ENCODE measurements at regions of chr6 and their contacts with region 1.

Region 1: DNA sequence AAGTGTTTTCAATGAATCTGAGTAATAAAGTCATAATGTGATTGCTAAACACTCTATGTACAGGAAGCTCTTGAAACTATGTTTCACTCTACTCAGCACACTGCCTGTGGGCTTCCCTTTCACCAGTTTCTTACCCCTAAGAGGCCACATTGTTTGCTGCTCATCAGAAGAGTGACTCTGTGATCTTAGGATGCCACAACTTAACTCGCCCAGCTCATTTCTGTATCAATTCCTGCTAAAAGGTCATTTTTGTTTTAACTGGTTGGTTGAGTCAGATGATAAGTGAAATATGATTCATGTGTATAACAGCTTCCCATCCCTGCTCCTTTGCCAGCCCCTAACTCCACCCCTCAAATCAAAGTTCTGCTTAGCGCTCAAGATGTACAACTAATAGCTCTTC is 9.8 kb upstream of the NDUFAF4 start:
- DNase-seq: no peak
- ATAC-seq: peak in 3 of 4 donors; percentile 40 to 47 (median 41)
- H3K4me3 ChIP-seq: no peak overlapping the region
- H3K27ac ChIP-seq: no peak overlapping the region
- H3K4me1 ChIP-seq: no peaks in the 10 kb centered on the region
- H3K27me3 ChIP-seq: no peaks in the 10 kb centered on the region
- CTCF ChIP-seq: no peak
- POLR2A ChIP-seq: no peak

Region 2: DNA sequence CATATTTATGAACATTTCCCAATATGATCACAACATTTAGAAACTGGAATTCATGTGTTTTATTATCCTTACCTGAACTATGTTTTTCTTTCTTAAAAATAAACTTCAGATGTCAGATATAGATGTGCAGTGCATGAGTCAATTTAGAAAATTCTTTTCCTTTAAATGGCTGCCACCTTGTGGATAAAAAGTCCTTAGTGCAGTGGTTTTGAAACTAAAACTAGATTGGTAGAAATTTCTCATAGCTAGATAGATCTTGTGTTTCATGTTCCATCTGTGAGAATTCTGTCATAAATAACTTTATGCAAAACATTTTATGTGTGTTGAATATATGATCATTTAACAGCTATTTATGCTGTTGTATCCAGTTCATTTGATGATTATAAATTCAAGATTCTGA is 152.0 kb after region 1 on chr6:
- intact Hi-C with region 1: loop called (anchors 5 to 10 kb)
- DNase-seq: no peak
- ATAC-seq: peak; percentile 41 to 76 (median 64)
- H3K4me3 ChIP-seq: no peak overlapping the region
- H3K27ac ChIP-seq: no peak overlapping the region
- H3K4me1 ChIP-seq: peaks cover 0 to 3% (median 0%) of the 10 kb centered on the region in 4 donors
- H3K27me3 ChIP-seq: no peaks in the 10 kb centered on the region
- CTCF ChIP-seq: peak; percentile 62 to 64 (median 62)
- POLR2A ChIP-seq: no peak

Region 3: DNA sequence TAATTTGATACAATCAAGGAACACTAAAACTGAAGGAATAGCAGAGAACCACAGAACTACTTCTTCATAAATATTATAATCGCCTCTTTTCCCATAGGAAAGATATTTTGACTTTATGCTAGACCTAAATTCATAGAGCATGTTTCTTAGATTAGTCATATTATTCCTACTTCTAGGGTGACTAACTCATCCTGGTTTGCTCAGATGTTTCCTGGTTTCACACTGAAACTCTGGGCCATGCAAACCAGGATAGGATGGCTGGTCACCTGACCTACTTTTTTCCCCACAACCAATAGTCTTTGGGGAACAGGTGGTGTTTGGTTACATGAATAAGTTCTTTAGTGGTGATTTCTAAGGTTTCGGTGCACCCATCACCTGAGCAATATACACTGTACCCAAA is 332.7 kb after region 1 on chr6:
- intact Hi-C with region 1: no loop called
- DNase-seq: no peak
- ATAC-seq: no peak
- H3K4me3 ChIP-seq: no peak overlapping the region
- H3K27ac ChIP-seq: no peak overlapping the region
- H3K4me1 ChIP-seq: no peaks in the 10 kb centered on the region
- H3K27me3 ChIP-seq: no peaks in the 10 kb centered on the region
- CTCF ChIP-seq: no peak
- POLR2A ChIP-seq: no peak

Measured in right lobe of liver (tissue), 6 donors.